ENCODE measurements at regions of chr6 and their contacts with region 1.

Region 1: DNA sequence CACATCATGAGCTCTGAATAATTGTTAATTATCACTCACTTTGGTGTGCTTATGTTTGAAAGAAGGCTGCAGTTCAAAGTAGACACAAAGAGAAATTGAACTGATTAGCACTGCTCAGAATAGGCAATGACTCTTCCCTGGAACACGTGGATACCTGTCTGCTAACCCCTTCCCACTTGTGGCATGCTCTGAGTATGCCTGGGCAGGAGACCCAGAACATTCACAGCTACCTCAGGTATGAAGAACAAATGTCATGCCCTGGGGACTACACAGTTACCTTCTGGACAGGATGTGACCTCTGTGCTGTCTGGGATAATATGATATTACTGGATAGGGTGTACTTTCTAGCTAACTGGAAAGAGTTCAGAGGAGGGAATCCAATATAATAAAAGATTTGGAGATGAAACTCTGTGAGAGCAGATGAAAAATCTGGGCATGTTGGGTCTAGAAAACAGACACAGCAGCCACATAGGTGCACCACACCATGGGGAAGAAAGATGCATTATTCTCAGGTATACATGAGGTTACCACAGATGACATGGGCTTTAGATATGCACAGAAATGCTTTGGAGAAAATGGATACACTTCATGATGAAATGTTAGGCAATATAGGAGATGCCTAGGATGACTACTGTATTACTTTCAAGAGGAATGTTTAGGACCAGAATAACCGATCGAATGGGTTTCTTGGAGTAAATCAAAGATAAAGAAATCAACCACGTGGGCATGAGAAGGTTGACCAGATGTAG is 324.2 kb upstream of the PREP start:
- DNase-seq: peak in 1 of 2 donors; percentile 24
- H3K4me3 ChIP-seq: no peak overlapping the region
- H3K27ac ChIP-seq: no peak overlapping the region
- H3K4me1 ChIP-seq: no peaks in the 10 kb centered on the region
- H3K27me3 ChIP-seq: no peaks in the 10 kb centered on the region
- CTCF ChIP-seq: no peak
- POLR2A ChIP-seq: no peak

Region 2: DNA sequence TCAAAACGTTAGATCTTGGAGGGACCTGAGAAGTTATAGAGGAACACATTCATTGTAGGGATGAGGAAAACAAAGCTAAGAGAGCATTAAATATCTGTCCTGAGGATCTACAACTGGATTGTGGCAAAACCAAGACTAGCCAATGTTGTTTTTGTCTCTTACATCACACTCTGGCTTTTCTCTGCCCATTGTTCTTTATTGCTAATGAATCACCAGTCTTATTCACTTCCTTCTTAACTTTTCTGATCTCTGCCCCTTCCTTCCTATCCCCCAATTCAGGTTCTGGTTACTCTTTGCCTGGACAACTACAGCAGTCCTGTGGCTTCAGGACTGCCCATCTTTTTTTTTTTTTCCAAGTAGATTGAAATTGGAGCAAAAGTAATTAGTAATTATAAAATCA is 267.2 kb before region 1 on chr6:
- intact Hi-C with region 1: loop called (anchors 10 kb)
- DNase-seq: no peak
- H3K4me3 ChIP-seq: no peak overlapping the region
- H3K27ac ChIP-seq: no peak overlapping the region
- H3K4me1 ChIP-seq: no peaks in the 10 kb centered on the region
- H3K27me3 ChIP-seq: no peaks in the 10 kb centered on the region
- CTCF ChIP-seq: no peak
- POLR2A ChIP-seq: no peak